Activated CD4-positive, alpha-beta T cell treated with anti-CD3 and anti-CD28 coated beads, Interleukin-2, amount 10 ng/mL, durations not matched to agents 7 days and 5 days (primary cell): ENCODE measurements at regions of chr11 and their contacts with region 1.

Region 1: DNA sequence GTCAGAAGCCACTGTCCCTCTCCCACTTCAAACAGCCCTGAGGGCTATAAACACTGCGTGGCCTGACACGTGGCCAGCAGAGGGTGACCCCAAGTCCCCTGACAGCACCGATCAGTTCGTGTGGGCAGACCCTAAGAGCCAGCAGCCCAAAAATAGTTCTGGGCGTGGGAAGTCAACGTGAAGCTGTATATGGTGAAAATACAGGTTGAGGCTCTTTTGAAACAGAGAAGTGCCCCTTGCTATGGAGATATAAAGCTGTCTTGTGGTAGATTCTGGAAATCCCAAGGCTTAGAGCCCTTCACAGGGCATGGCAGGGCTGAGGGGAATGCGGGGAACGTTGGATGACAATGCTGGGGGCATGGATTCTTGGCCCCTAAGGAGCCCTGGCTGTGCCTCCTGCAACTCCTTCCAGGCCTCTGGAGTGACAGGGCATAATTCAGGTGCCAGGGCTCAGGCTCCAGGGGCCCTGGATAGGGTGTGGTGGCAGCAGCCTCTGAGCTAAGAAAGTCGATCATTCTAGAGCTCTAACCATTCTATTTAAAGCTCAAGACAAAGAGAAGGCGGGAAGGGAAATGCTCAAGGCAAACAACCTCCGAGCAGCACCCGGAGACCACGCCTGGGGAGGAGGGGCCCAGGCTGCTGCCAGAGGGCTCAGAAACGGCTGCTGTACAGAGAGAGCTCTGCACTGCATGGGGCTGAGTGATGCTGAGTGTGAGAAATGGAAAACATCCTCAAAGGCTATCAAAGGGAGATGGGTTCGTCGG is 60.4 kb upstream of the CD5 start:
- DNase-seq: peak; percentile 95
- H3K4me3 Mint-ChIP-seq: peak overlapping the region; percentile 63
- H3K27ac Mint-ChIP-seq: peak overlapping the region; percentile 99
- H3K4me1 Mint-ChIP-seq: peaks cover 65% of the 10 kb centered on the region
- H3K27me3 Mint-ChIP-seq: no peaks in the 10 kb centered on the region

Region 2: DNA sequence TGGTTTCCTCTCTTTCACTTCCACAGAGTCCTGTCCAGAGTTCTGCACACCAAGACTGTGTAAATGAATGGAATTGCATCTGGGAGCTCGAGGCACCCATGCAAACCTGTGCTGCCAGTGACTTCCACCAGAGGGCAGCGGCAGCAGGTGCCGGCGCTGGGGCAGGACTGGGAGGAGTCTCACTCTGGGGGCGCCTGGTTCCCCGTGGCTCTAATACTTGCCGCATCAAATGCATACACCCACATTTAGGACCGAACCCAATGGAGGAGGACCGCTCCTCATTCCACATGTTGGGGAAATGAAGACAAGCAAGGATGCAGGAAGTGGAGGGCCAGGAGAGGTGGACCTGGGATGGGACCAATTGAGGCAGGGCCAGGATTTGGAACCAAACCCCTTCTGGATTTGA is 71.6 kb before region 1 on chr11:
- CTCF ChIA-PET with region 1: interaction called, 12 read pairs
- POLR2A ChIA-PET with region 1: interaction called, 3 read pairs
- DNase-seq: peak; percentile 85
- H3K4me3 Mint-ChIP-seq: peak overlapping the region; percentile 46
- H3K27ac Mint-ChIP-seq: peak overlapping the region; percentile 61
- H3K4me1 Mint-ChIP-seq: peaks cover 24% of the 10 kb centered on the region
- H3K27me3 Mint-ChIP-seq: peaks cover 5% of the 10 kb centered on the region

Region 3: GRCh38 chr11:61056571-61056970 is 14.6 kb after region 1 on chr11:
- CTCF ChIA-PET with region 1: interaction called, 73 read pairs
- POLR2A ChIA-PET with region 1: interaction called, 8 read pairs
- DNase-seq: no peak
- H3K4me3 Mint-ChIP-seq: no peak overlapping the region
- H3K27ac Mint-ChIP-seq: peak overlapping the region; percentile 43
- H3K4me1 Mint-ChIP-seq: peaks cover 79% of the 10 kb centered on the region
- H3K27me3 Mint-ChIP-seq: no peaks in the 10 kb centered on the region